GM12878 (cell line): ENCODE measurements at regions of chr21 and their contacts with region 1.

Region 1: GRCh38 chr21:33127154-33127893 is 57.4 kb downstream of the OLIG1 start:
- DNase-seq: peak; percentile 19
- ATAC-seq: peak; percentile 93
- H3K4me3 ChIP-seq: peak overlapping the region; percentile 38; the same call in 1 of the 2 replicates
- H3K27ac ChIP-seq: no peak overlapping the region
- H3K4me1 ChIP-seq: no peaks in the 10 kb centered on the region
- H3K27me3 ChIP-seq: peaks cover 2% of the 10 kb centered on the region in 2 experiments; a peak in 3 of 4 replicates
- CTCF ChIP-seq: peak; percentile 76 to 89 (median 82)
- EP300 ChIP-seq: no peak
- POLR2A ChIP-seq: no peak
- RAD21 ChIP-seq: peak; percentile 86

Region 2: GRCh38 chr21:32653311-32653901 is 473.9 kb before region 1 on chr21:
- CTCF ChIA-PET with region 1: no interaction called
- POLR2A ChIA-PET with region 1: no interaction called
- RAD21 ChIA-PET with region 1: no interaction called
- SMC1A ChIA-PET with region 1: no interaction called
- in situ Hi-C with region 1: no loop called
- intact Hi-C with region 1: loop called (anchors 5 kb)
- DNase-seq: no peak
- ATAC-seq: peak; percentile 94
- H3K4me3 ChIP-seq: no peak overlapping the region
- H3K27ac ChIP-seq: no peak overlapping the region
- H3K4me1 ChIP-seq: peaks cover 5% of the 10 kb centered on the region
- H3K27me3 ChIP-seq: no peaks in the 10 kb centered on the region
- CTCF ChIP-seq: peak; percentile 66 to 78 (median 74); a peak in 5 of 6 replicates
- EP300 ChIP-seq: no peak
- POLR2A ChIP-seq: no peak
- RAD21 ChIP-seq: peak; percentile 66

Region 3: DNA sequence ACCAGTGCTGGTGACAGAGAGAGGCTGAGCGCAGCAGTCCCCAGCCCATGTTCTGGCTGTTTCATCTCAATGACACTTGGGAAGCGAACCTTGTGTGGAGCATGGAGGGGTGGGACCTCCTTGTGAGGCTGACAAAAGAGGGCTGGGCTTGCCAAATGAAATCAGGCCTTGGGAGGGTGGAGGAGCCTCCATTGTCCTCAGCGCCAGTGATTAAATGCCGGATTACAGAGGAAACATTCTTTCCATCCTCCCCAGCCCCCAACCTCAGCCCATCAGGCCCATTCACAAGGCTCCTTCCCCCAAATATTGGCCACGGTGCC is 292.4 kb before region 1 on chr21:
- CTCF ChIA-PET with region 1: interaction called, 11 read pairs
- POLR2A ChIA-PET with region 1: no interaction called
- RAD21 ChIA-PET with region 1: interaction called, 18 read pairs
- SMC1A ChIA-PET with region 1: interaction called, 4 read pairs
- in situ Hi-C with region 1: loop called (anchors 5 kb)
- intact Hi-C with region 1: loop called (anchors 2 kb)
- DNase-seq: no peak
- ATAC-seq: no peak
- H3K4me3 ChIP-seq: no peak overlapping the region
- H3K27ac ChIP-seq: no peak overlapping the region
- H3K4me1 ChIP-seq: no peaks in the 10 kb centered on the region
- H3K27me3 ChIP-seq: no peaks in the 10 kb centered on the region
- CTCF ChIP-seq: no peak
- EP300 ChIP-seq: no peak
- POLR2A ChIP-seq: no peak
- RAD21 ChIP-seq: no peak

Region 4: DNA sequence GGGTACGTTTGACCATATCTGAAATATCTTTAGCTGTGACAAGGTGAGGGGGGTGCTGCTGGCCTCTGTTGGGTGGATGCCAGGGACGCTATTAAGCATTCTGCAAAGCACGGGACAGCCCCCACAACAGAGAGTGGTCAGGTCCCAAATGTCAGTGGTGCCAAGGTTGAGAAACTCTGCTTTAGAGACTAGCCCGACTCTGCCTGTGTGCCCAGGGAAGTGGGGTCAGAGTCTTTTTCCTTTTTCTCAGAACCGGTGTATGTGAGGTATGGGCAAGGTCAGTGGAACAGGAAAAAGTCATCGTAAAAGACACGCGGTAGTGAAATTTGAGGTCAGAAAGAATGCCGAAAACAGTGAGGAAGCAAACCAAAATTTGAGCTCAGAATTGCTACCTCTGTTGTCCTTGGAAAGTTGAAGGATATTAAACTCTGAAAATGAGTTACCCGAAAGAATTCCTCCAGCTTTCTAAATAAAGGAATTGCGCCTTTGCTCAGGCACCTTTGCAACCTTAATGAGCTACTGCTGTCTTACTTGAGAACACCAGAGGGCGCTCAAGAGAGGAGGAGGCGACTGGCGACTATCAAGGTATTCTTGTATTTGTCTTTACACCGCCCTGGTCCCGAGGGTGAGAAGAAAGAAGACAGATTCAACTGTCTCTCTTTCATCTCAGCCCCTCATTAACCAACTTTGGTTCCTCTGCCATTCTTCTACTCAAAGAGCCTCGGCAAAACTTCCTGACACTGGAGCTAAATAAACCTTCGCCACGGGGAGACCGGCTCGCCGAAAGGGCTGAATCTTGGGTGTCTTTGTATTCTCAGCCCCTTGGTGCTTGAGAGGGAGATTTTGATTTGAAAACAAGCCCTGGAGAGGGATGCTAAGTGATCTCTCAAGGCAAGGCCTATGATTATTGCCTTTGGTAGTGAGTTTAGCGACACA is 187.0 kb before region 1 on chr21:
- CTCF ChIA-PET with region 1: interaction called, 37 read pairs
- POLR2A ChIA-PET with region 1: no interaction called
- RAD21 ChIA-PET with region 1: interaction called, 12 read pairs
- SMC1A ChIA-PET with region 1: interaction called, 7 read pairs
- in situ Hi-C with region 1: no loop called
- intact Hi-C with region 1: loop called (anchors 1 kb)
- DNase-seq: no peak
- ATAC-seq: peak; percentile 76
- H3K4me3 ChIP-seq: no peak overlapping the region
- H3K27ac ChIP-seq: no peak overlapping the region
- H3K4me1 ChIP-seq: no peaks in the 10 kb centered on the region
- H3K27me3 ChIP-seq: no peaks in the 10 kb centered on the region
- CTCF ChIP-seq: peak; percentile 60 to 78 (median 67)
- EP300 ChIP-seq: no peak
- POLR2A ChIP-seq: no peak
- RAD21 ChIP-seq: peak; percentile 64

Region 5: GRCh38 chr21:32994305-32994704 is 133.0 kb before region 1 on chr21:
- CTCF ChIA-PET with region 1: interaction called, 47 read pairs
- POLR2A ChIA-PET with region 1: no interaction called
- RAD21 ChIA-PET with region 1: interaction called, 23 read pairs
- SMC1A ChIA-PET with region 1: interaction called, 9 read pairs
- in situ Hi-C with region 1: no loop called
- intact Hi-C with region 1: loop called (anchors 1 kb)
- DNase-seq: no peak
- ATAC-seq: peak; percentile 38; the same call in 1 of the 3 replicates
- H3K4me3 ChIP-seq: no peak overlapping the region
- H3K27ac ChIP-seq: no peak overlapping the region
- H3K4me1 ChIP-seq: no peaks in the 10 kb centered on the region
- H3K27me3 ChIP-seq: peaks cover 0 to 2% of the 10 kb centered on the region in 2 experiments; a peak in 3 of 4 replicates
- CTCF ChIP-seq: peak; percentile 16 to 35 (median 23); a peak in 3 of 6 replicates
- EP300 ChIP-seq: no peak
- POLR2A ChIP-seq: no peak
- RAD21 ChIP-seq: peak; percentile 39; the same call in 1 of the 2 replicates

Region 6: GRCh38 chr21:33230545-33231398 is 103.4 kb after region 1 on chr21:
- CTCF ChIA-PET with region 1: no interaction called
- POLR2A ChIA-PET with region 1: no interaction called
- RAD21 ChIA-PET with region 1: no interaction called
- SMC1A ChIA-PET with region 1: no interaction called
- in situ Hi-C with region 1: no loop called
- intact Hi-C with region 1: no loop called
- DNase-seq: no peak
- ATAC-seq: peak; percentile 61
- H3K4me3 ChIP-seq: peak overlapping the region; percentile 100
- H3K27ac ChIP-seq: peak overlapping the region; percentile 96
- H3K4me1 ChIP-seq: peaks cover 17% of the 10 kb centered on the region
- H3K27me3 ChIP-seq: no peaks in the 10 kb centered on the region
- CTCF ChIP-seq: peak in 1 of 3 experiments; percentile 11; a peak in 1 of 6 replicates
- EP300 ChIP-seq: no peak
- POLR2A ChIP-seq: peak; percentile 84
- RAD21 ChIP-seq: 0 out of 2 replicates have a peak, but pooled peaks have one; percentile 23

Region 7: GRCh38 chr21:33451634-33452071 is 324.3 kb after region 1 on chr21:
- CTCF ChIA-PET with region 1: no interaction called
- POLR2A ChIA-PET with region 1: no interaction called
- RAD21 ChIA-PET with region 1: no interaction called
- SMC1A ChIA-PET with region 1: no interaction called
- in situ Hi-C with region 1: no loop called
- intact Hi-C with region 1: loop called (anchors 5 kb)
- DNase-seq: no peak
- ATAC-seq: no peak
- H3K4me3 ChIP-seq: no peak overlapping the region
- H3K27ac ChIP-seq: no peak overlapping the region
- H3K4me1 ChIP-seq: no peaks in the 10 kb centered on the region
- H3K27me3 ChIP-seq: no peaks in the 10 kb centered on the region
- CTCF ChIP-seq: no peak
- EP300 ChIP-seq: no peak
- POLR2A ChIP-seq: no peak
- RAD21 ChIP-seq: no peak